Left lung (tissue), 14 donors: ENCODE measurements at regions of chr16 and their contacts with region 1.

Region 1: DNA sequence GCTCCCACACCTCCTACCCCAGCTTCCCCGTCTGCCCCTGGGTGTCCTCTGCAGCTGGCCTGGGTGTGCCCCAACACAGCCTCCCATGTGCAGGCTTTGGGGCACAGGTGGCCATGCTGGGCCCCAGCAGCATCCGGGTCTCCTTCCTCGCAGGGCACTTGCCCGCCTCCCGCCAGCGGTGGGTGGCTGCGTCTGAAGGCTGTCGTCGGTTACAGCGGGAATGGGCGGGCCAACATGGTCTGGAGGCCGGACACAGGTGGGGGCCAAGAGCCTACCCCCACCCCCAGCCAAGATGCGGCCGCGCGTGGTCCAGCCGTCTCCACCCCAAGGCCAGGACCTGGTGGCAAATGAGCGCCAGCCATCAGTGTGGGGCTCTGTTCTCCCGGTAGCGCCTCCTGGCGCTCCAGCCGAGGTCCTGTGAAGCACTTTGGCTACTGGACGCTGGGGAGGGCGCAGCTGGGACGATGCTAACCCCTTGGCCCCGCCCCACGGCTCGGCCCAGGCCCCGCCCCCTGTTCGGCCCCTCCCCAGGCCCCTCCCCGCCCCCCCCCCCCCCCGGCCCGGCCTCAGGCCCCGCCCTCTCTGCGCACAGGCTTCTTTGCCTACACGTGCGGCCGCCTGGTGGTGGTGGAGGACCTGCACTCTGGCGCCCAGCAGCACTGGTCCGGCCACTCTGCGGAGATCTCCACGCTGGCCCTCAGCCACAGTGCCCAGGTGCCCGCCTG is 7.3 kb upstream of the RHOT2 start:
- DNase-seq: peak in 3 of 4 donors; percentile 74 to 95 (median 91)
- ATAC-seq: peak; percentile 94
- H3K4me3 ChIP-seq: peak overlapping the region in 1 of 2 donors; percentile 26
- H3K27ac ChIP-seq: peak overlapping the region; percentile 44 to 58
- H3K4me1 ChIP-seq: peaks cover 3 to 17% of the 10 kb centered on the region in 2 donors
- H3K27me3 ChIP-seq: no peaks in the 10 kb centered on the region
- CTCF ChIP-seq: peak; percentile 31 to 76

Region 2: GRCh38 chr16:578870-579405 is 81.7 kb before region 1 on chr16:
- intact Hi-C with region 1: loop called in 1 of 2 experiments (anchors 5 kb)
- DNase-seq: peak in 3 of 4 donors; percentile 60 to 94 (median 67)
- ATAC-seq: peak; percentile 93
- H3K4me3 ChIP-seq: no peak overlapping the region
- H3K27ac ChIP-seq: no peak overlapping the region
- H3K4me1 ChIP-seq: peaks cover 0 to 9% of the 10 kb centered on the region in 2 donors
- H3K27me3 ChIP-seq: no peaks in the 10 kb centered on the region
- CTCF ChIP-seq: peak; percentile 68 to 89

Region 3: GRCh38 chr16:788394-789126 is 127.9 kb after region 1 on chr16 and contains the start of gene CHTF18:
- intact Hi-C with region 1: no loop called
- DNase-seq: peak; percentile 84 to 95 (median 92)
- ATAC-seq: peak; percentile 95
- H3K4me3 ChIP-seq: peak within 1 kb of the TSS; percentile 92 to 97
- H3K27ac ChIP-seq: peak within 1 kb of the TSS in 1 of 2 donors; percentile 71
- H3K4me1 ChIP-seq: peaks cover 11 to 24% of the 10 kb centered on the region in 2 donors
- H3K27me3 ChIP-seq: peaks cover 0 to 5% of the 10 kb centered on the region in 2 donors
- CTCF ChIP-seq: no peak
- polyA plus RNA-seq, gene CHTF18: 23.7 to 30.8 (median 24.4) TPM